Activated CD4-positive, alpha-beta T cell treated with anti-CD3 and anti-CD28 coated beads for 36 hours (primary cell): ENCODE measurements at regions of chr9 and their contacts with region 1.

Region 1: GRCh38 chr9:124852829-124853531 is at the start of gene WDR38:
- DNase-seq: peak; percentile 85
- ATAC-seq: peak; percentile 88
- H3K4me3 Mint-ChIP-seq: peak within 1 kb of the TSS; percentile 46
- H3K27ac Mint-ChIP-seq: no peak within 1 kb of the TSS
- H3K4me1 Mint-ChIP-seq: peaks cover 16% of the 10 kb centered on the region
- H3K27me3 Mint-ChIP-seq: peaks cover 10% of the 10 kb centered on the region
- total RNA-seq, gene WDR38: not detected

Region 2: DNA sequence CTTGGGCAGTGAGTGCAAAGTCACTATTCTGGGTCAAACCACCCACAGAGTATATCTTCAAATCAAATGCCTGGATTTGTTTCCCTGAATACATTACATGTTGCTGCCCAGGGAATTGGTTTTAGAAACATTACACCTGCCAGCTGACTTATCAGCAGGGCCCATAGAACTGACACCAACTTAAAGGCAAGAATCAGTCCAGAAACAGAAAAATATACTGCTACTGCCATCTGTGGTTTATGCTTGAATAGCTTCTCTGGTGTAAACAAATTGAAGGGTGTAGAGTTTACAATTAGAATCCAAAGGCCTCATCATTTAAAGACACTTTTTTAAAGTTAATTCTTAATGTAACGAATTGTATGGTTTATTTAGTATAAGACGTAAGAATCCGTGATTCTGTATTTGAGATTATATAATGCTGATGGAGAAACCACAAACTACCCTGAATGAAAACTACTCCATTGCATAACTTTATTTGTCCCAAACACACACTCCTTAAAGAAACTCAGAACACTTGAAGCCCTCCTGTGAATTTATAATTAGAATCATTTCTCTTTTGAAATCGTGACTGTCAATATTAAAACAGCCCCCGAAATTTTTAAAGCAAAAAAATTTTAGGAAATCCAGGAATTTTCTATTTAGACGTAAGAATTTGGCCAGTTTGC is 88.1 kb before region 1 on chr9:
- CTCF ChIA-PET with region 1: interaction called, 260 read pairs
- POLR2A ChIA-PET with region 1: interaction called, 8 read pairs
- intact Hi-C with region 1: no loop called
- DNase-seq: no peak
- ATAC-seq: no peak
- H3K4me3 Mint-ChIP-seq: no peak overlapping the region
- H3K27ac Mint-ChIP-seq: no peak overlapping the region
- H3K4me1 Mint-ChIP-seq: peaks cover 10% of the 10 kb centered on the region
- H3K27me3 Mint-ChIP-seq: peaks cover 60% of the 10 kb centered on the region

Region 3: GRCh38 chr9:125374443-125375309 is 521.7 kb after region 1 on chr9:
- CTCF ChIA-PET with region 1: interaction called, 5 read pairs
- POLR2A ChIA-PET with region 1: no interaction called
- intact Hi-C with region 1: loop called in 1 of 2 experiments (anchors 1 kb)
- DNase-seq: peak; percentile 85
- ATAC-seq: peak; percentile 97
- H3K4me3 Mint-ChIP-seq: peak overlapping the region; percentile 26
- H3K27ac Mint-ChIP-seq: no peak overlapping the region
- H3K4me1 Mint-ChIP-seq: peaks cover 2% of the 10 kb centered on the region
- H3K27me3 Mint-ChIP-seq: no peaks in the 10 kb centered on the region

Region 4: DNA sequence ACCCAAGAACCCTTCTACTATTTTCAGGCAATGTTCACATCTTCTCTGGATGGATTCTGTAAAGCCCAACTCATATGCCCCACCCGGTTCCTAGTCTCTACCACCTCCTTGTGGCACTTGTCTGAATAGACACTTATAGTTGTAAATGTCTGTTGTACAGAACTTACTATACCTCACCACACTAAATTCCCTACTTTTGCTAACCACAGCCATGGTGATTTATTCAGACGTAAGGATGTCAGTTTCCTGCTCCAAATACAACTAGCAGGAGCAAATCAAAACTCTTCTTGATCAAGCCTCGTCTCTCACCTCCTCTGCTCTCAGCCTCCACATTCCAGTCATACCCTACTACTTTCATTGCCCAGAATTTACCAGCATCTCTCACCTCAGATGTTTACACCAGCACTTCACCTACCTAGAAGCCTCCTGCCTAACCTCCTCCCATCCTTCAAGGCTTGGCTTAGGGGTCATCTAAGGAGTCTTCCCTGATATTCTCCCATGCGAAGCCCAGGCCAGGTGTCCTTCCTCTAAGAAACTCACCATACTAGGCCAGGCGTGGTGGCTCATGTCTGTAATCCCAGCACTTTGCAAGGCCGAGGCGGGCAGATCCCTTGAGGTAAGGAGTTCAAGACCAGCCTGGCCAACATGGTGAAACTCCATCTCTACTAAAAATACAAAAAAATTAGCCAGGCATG is 778.6 kb after region 1 on chr9:
- CTCF ChIA-PET with region 1: no interaction called
- POLR2A ChIA-PET with region 1: no interaction called
- intact Hi-C with region 1: no loop called
- DNase-seq: peak; percentile 59
- ATAC-seq: peak; percentile 51
- H3K4me3 Mint-ChIP-seq: no peak overlapping the region
- H3K27ac Mint-ChIP-seq: peak overlapping the region; percentile 26
- H3K4me1 Mint-ChIP-seq: peaks cover 83% of the 10 kb centered on the region
- H3K27me3 Mint-ChIP-seq: no peaks in the 10 kb centered on the region